Activated CD4-positive, alpha-beta T cell treated with anti-CD3 and anti-CD28 coated beads for 36 hours (primary cell): ENCODE measurements at regions of chr6 and their contacts with region 1.

Region 1: DNA sequence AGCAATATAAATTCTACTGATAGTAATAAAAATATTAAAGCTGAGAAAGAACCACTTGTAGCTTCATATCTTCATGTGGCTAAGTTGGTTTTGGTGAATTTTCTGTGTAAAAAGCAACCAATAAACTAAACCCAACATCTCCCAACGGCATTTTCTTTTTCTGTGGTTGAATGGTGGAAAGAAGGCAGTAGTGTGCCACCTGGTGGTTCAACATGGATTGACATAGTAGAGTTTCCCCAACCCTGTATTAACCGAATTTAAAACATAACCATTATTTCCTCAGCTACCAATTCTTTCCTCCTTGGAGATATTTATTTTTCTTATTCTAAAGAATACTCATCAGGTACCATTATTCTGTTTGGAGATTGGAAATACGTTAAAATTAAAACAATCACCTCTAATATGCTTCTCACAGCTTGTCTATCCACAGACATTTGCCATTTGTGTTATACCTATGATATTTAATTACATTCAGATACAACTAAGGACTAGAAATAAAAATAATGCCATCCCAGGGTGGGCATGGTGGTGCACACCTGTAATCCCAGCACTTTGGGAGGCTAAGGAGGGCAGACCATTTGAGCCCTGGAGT is 117.1 kb upstream of the EEF1E1 start:
- DNase-seq: peak; percentile 57
- ATAC-seq: peak; percentile 39
- H3K4me3 Mint-ChIP-seq: no peak overlapping the region
- H3K27ac Mint-ChIP-seq: no peak overlapping the region
- H3K4me1 Mint-ChIP-seq: no peaks in the 10 kb centered on the region
- H3K27me3 Mint-ChIP-seq: peaks cover 5% of the 10 kb centered on the region

Region 2: GRCh38 chr6:7899101-7899888 is 320.2 kb before region 1 on chr6:
- CTCF ChIA-PET with region 1: interaction called, 4 read pairs
- POLR2A ChIA-PET with region 1: no interaction called
- intact Hi-C with region 1: loop called in 1 of 2 experiments (anchors 5 kb)
- DNase-seq: no peak
- ATAC-seq: peak; percentile 47
- H3K4me3 Mint-ChIP-seq: no peak overlapping the region
- H3K27ac Mint-ChIP-seq: no peak overlapping the region
- H3K4me1 Mint-ChIP-seq: no peaks in the 10 kb centered on the region
- H3K27me3 Mint-ChIP-seq: no peaks in the 10 kb centered on the region

Region 3: DNA sequence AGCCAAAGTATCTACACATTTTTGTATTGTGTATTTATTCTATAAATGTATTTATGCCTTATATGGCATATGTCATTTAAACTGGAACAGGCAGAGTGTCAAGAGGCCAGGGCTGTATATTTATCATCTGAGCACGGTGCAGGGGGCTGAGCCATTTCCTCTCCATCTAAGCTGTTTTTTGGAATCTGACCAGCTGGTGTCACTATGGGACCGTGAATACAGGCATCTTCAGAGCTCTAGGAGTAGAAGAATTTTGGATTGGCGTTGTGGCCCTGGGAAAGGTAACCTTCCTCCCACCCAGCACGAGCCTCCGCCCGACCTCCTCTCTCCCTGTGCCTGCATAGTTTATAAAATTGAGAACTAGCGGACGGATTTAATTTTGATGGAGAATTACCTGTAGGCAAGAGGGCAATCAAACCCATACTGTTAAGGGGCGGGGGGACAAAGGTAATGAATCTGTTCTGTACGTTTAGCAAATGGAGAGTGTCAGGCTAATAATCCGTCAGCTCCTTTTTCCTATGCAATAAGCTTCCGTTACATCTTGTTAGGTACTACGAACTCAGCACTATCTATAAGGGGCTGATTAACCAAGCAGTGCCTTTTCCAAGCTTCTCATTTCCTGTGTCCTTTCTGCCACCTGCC is 88.1 kb before region 1 on chr6:
- CTCF ChIA-PET with region 1: interaction called, 163 read pairs
- POLR2A ChIA-PET with region 1: no interaction called
- intact Hi-C with region 1: loop called (anchors 1 kb)
- DNase-seq: peak; percentile 58
- ATAC-seq: peak; percentile 64
- H3K4me3 Mint-ChIP-seq: no peak overlapping the region
- H3K27ac Mint-ChIP-seq: no peak overlapping the region
- H3K4me1 Mint-ChIP-seq: no peaks in the 10 kb centered on the region
- H3K27me3 Mint-ChIP-seq: peaks cover 26% of the 10 kb centered on the region

Region 4: GRCh38 chr6:8139451-8139850 is 80.0 kb before region 1 on chr6:
- CTCF ChIA-PET with region 1: interaction called, 15 read pairs
- POLR2A ChIA-PET with region 1: no interaction called
- intact Hi-C with region 1: no loop called
- DNase-seq: no peak
- ATAC-seq: no peak
- H3K4me3 Mint-ChIP-seq: no peak overlapping the region
- H3K27ac Mint-ChIP-seq: no peak overlapping the region
- H3K4me1 Mint-ChIP-seq: no peaks in the 10 kb centered on the region
- H3K27me3 Mint-ChIP-seq: peaks cover 24% of the 10 kb centered on the region

Region 5: GRCh38 chr6:8229915-8230756 is 10.7 kb after region 1 on chr6:
- CTCF ChIA-PET with region 1: interaction called, 16 read pairs
- POLR2A ChIA-PET with region 1: no interaction called
- intact Hi-C with region 1: no loop called
- DNase-seq: no peak
- ATAC-seq: no peak
- H3K4me3 Mint-ChIP-seq: no peak overlapping the region
- H3K27ac Mint-ChIP-seq: no peak overlapping the region
- H3K4me1 Mint-ChIP-seq: no peaks in the 10 kb centered on the region
- H3K27me3 Mint-ChIP-seq: peaks cover 2% of the 10 kb centered on the region

Region 6: GRCh38 chr6:8400663-8401062 is 181.2 kb after region 1 on chr6:
- CTCF ChIA-PET with region 1: no interaction called
- POLR2A ChIA-PET with region 1: no interaction called
- intact Hi-C with region 1: no loop called
- DNase-seq: no peak
- ATAC-seq: no peak
- H3K4me3 Mint-ChIP-seq: no peak overlapping the region
- H3K27ac Mint-ChIP-seq: no peak overlapping the region
- H3K4me1 Mint-ChIP-seq: no peaks in the 10 kb centered on the region
- H3K27me3 Mint-ChIP-seq: no peaks in the 10 kb centered on the region